Ascending aorta (tissue), 2 donors: ENCODE measurements at regions of chr7 and their contacts with region 1.

Region 1: DNA sequence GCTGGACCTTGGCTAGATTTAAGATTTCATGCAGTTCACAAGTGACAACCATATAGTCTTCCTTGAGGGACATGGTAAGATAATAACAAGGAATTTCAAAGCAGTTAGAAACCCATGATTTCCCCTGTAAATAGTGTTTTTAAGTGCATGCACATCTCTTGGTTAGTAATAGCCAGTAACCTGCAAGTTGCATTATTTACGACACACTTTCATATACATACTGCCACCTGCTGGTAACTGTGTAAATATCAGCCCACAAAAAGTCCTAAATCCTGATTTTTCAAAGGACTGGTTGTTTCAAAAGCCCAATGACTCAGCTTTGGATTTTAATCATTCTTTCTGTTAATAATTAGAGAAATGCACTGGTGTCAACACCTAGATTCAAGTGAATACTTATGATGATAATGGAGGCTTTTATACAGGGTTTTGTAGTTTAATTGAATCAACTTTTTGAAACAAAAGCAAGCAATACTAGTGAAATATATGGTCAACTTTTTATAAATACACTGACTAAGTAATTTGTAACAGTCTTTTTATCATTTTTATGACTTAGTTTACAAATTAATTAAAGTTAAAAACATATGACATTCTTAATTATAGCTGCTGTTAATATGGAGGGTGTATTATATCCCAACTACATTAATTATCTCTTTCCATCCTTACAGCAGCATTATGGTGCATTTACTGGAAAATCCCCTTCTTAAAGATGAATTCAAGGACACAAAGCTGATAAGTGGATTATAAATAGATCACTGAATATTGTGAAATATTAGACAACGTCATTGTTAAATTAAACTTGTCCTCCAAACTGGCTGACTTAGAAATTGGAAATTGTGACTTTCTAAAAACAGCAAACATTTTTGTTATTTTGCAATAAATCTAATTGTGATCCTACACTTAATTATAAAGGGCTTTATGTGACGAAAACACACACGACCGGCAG is 367.7 kb upstream of the SEMA3D start:
- DNase-seq: peak in 1 of 2 donors; percentile 58
- H3K4me3 ChIP-seq: no peak overlapping the region
- H3K27ac ChIP-seq: no peak overlapping the region
- H3K4me1 ChIP-seq: no peaks in the 10 kb centered on the region
- H3K27me3 ChIP-seq: no peaks in the 10 kb centered on the region
- CTCF ChIP-seq: peak; percentile 39 to 71 (median 59)

Region 2: GRCh38 chr7:85041605-85042216 is 512.8 kb before region 1 on chr7:
- intact Hi-C with region 1: loop called (anchors 2 kb)
- DNase-seq: peak in 1 of 2 donors; percentile 72
- H3K4me3 ChIP-seq: no peak overlapping the region
- H3K27ac ChIP-seq: no peak overlapping the region
- H3K4me1 ChIP-seq: no peaks in the 10 kb centered on the region
- H3K27me3 ChIP-seq: no peaks in the 10 kb centered on the region
- CTCF ChIP-seq: peak; percentile 38 to 82 (median 70)